CD14-positive monocyte (primary cell): ENCODE measurements at regions of chr21 and their contacts with region 1.

Region 1: DNA sequence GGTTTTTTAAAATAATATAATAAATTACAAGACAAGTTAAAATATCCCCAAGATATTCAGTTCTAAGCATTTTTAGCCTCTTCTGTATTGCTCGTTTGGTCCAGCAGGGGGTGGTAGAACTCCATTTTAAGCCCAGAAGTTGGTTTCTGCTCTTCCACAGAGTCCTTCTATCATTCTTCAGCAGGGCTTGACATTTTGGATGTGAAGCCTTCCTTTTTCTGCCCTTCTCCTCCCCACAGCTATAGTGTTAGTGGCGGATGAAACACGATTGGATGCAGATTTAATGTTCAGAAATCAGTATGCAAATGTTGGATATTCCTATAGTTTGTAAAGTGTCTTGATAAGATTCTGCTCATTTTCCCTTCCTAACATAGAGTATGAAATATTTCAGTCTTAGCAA is 1.4 kb downstream of the NCAM2 start:
- DNase-seq: peak; percentile 22 to 37 (median 32)
- H3K4me3 ChIP-seq: no peak overlapping the region
- H3K4me3 Mint-ChIP-seq: no peak overlapping the region
- H3K27ac ChIP-seq: no peak overlapping the region
- H3K27ac Mint-ChIP-seq: no peak overlapping the region
- H3K4me1 ChIP-seq: peaks cover 20 to 23% of the 10 kb centered on the region in 2 donors
- H3K4me1 Mint-ChIP-seq: peaks cover 23% of the 10 kb centered on the region
- H3K27me3 ChIP-seq: peaks cover 26 to 30% of the 10 kb centered on the region in 2 donors
- H3K27me3 Mint-ChIP-seq: peaks cover 30 to 35% (median 31%) of the 10 kb centered on the region in 3 donors
- CTCF ChIP-seq: peak; percentile 90

Region 2: GRCh38 chr21:20882462-20883407 is 116.9 kb before region 1 on chr21:
- intact Hi-C with region 1: no loop called
- DNase-seq: no peak
- H3K4me3 ChIP-seq: no peak overlapping the region
- H3K4me3 Mint-ChIP-seq: no peak overlapping the region
- H3K27ac ChIP-seq: no peak overlapping the region
- H3K27ac Mint-ChIP-seq: no peak overlapping the region
- H3K4me1 ChIP-seq: no peaks in the 10 kb centered on the region
- H3K4me1 Mint-ChIP-seq: no peaks in the 10 kb centered on the region
- H3K27me3 ChIP-seq: no peaks in the 10 kb centered on the region
- H3K27me3 Mint-ChIP-seq: no peaks in the 10 kb centered on the region
- CTCF ChIP-seq: peak; percentile 20

Region 3: DNA sequence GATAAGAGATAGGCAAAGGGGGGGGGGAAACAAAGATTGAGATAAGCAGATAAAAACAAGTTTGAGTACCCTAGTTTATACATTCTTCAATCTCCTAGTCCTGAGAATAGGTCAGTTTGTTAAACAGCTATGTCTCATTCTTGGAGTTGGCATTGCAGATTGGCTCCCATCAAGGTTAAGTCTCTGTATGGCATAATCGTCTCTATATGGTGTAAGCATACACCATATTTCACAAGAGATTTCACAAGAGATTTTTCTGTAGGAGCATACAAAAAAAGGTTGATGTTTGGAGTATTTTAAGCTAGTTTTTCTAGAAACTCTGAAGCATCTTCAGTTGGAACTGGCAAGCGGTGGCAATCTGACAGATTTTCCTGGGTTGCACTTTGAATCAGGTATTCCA is 34.4 kb after region 1 on chr21:
- intact Hi-C with region 1: no loop called
- DNase-seq: peak; percentile 6 to 51 (median 46)
- H3K4me3 ChIP-seq: peak overlapping the region in 1 of 3 experiments; percentile 19
- H3K4me3 Mint-ChIP-seq: no peak overlapping the region
- H3K27ac ChIP-seq: no peak overlapping the region
- H3K27ac Mint-ChIP-seq: peak overlapping the region in 1 of 7 donors; percentile 73
- H3K4me1 ChIP-seq: peaks cover 24 to 29% of the 10 kb centered on the region in 2 donors
- H3K4me1 Mint-ChIP-seq: peaks cover 36% of the 10 kb centered on the region
- H3K27me3 ChIP-seq: no peaks in the 10 kb centered on the region
- H3K27me3 Mint-ChIP-seq: peaks cover 0 to 2% (median 0%) of the 10 kb centered on the region in 3 donors
- CTCF ChIP-seq: no peak

Region 4: DNA sequence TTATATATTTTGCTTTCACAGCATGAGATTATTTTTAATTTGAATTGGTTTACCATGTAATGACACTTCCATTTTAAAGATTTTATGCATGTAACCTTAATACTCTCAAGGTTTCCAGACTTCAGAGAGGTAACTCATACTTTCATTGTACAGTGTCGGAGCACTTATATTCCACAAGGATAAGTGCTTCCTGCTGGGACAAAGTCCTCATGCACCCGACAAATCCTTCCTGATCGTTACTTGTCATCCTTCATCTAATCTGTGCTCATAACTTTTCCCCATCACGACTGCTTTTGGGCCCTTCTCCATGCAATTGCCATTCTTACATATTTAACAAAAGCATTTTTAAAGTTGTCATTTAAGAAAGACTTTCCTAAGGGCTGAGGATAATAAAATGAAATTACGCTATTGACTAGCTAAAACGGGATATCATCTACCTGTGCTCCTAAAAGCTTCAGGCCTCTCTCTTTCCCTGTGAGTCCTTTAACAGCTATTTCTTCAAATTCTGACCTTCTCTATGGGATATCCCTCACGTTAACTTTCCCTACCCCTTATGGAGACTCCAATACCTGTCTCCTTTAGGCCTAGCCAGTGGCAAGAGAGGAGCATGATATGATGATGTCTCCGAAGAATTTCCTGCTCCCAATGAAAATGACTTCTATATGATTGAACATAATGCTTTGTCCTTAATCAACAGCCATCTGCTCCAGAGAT is 57.8 kb after region 1 on chr21:
- intact Hi-C with region 1: no loop called
- DNase-seq: no peak
- H3K4me3 ChIP-seq: no peak overlapping the region
- H3K4me3 Mint-ChIP-seq: no peak overlapping the region
- H3K27ac ChIP-seq: no peak overlapping the region
- H3K27ac Mint-ChIP-seq: no peak overlapping the region
- H3K4me1 ChIP-seq: peaks cover under 1 to 2% of the 10 kb centered on the region in 2 donors
- H3K4me1 Mint-ChIP-seq: peaks cover 9% of the 10 kb centered on the region
- H3K27me3 ChIP-seq: no peaks in the 10 kb centered on the region
- H3K27me3 Mint-ChIP-seq: no peaks in the 10 kb centered on the region
- CTCF ChIP-seq: no peak

Region 5: GRCh38 chr21:21101911-21102310 is 102.3 kb after region 1 on chr21:
- intact Hi-C with region 1: loop called in 1 of 2 experiments (anchors 5 kb)
- DNase-seq: peak; percentile 10 to 41 (median 20)
- H3K4me3 ChIP-seq: no peak overlapping the region
- H3K4me3 Mint-ChIP-seq: no peak overlapping the region
- H3K27ac ChIP-seq: no peak overlapping the region
- H3K27ac Mint-ChIP-seq: no peak overlapping the region
- H3K4me1 ChIP-seq: no peaks in the 10 kb centered on the region
- H3K4me1 Mint-ChIP-seq: peaks cover 2% of the 10 kb centered on the region
- H3K27me3 ChIP-seq: no peaks in the 10 kb centered on the region
- H3K27me3 Mint-ChIP-seq: peaks cover 0 to 4% (median 2%) of the 10 kb centered on the region in 3 donors
- CTCF ChIP-seq: peak; percentile 8

Region 6: GRCh38 chr21:22791986-22792560 is 1792.4 kb after region 1 on chr21:
- intact Hi-C with region 1: loop called (anchors 5 kb)
- DNase-seq: peak; percentile 0 to 24 (median 18)
- H3K4me3 ChIP-seq: no peak overlapping the region
- H3K4me3 Mint-ChIP-seq: no peak overlapping the region
- H3K27ac ChIP-seq: no peak overlapping the region
- H3K27ac Mint-ChIP-seq: no peak overlapping the region
- H3K4me1 ChIP-seq: no peaks in the 10 kb centered on the region
- H3K4me1 Mint-ChIP-seq: no peaks in the 10 kb centered on the region
- H3K27me3 ChIP-seq: no peaks in the 10 kb centered on the region
- H3K27me3 Mint-ChIP-seq: peaks cover 0 to 3% (median 1%) of the 10 kb centered on the region in 3 donors
- CTCF ChIP-seq: peak; percentile 86